Mammary epithelial cell (primary cell): ENCODE measurements at regions of chr9 and their contacts with region 1.

Region 1: DNA sequence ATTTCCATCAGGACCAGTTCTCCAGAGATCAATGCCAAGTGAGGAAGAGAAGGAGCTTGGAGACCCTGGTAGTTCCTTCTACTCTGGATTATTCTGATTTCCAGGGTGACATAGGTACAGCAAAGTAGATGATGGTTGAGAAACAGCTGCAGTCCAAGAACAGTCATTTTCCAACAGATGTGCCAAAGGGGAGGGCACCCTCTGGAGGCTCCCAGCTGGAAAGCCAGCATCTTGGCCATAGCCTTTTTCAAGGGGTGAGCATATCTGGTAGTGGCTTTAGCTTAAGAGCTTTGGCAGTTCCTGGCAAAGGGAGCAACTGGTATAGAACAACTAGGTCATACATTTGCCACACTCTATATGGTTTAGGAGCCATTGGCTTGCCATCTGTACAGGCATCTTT is 492.7 kb downstream of the RASEF start:
- DNase-seq: peak; percentile 6
- H3K4me3 ChIP-seq: no peak overlapping the region
- H3K27ac ChIP-seq: no peak overlapping the region
- H3K4me1 ChIP-seq: no peaks in the 10 kb centered on the region
- H3K27me3 ChIP-seq: no peaks in the 10 kb centered on the region
- CTCF ChIP-seq: peak; percentile 34 to 66

Region 2: DNA sequence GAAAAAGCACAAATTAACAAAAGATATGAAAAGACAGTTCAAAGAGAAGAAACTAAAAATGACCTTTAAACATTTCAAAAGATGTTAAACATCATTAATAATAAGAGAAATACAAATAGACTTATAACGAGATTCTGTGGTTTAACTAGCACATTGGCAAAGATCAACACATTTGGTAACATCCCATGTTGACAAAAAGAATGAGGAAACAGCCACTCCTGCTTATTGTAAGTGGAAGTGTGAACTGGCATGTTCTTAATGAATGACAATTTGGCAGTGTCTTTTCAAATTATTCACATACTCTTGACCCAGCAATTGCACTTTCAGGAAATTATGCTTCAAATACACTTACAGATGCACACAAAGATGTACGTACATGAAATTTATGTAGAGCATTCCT is 1057.2 kb before region 1 on chr9:
- CTCF ChIA-PET with region 1: interaction called, 17 read pairs
- dilution Hi-C with region 1: no loop called
- in situ Hi-C with region 1: no loop called
- intact Hi-C with region 1: no loop called
- DNase-seq: no peak
- H3K4me3 ChIP-seq: no peak overlapping the region
- H3K27ac ChIP-seq: no peak overlapping the region
- H3K4me1 ChIP-seq: no peaks in the 10 kb centered on the region
- H3K27me3 ChIP-seq: no peaks in the 10 kb centered on the region
- CTCF ChIP-seq: no peak

Region 3: GRCh38 chr9:82299870-82300269 is 270.4 kb before region 1 on chr9:
- CTCF ChIA-PET with region 1: no interaction called
- dilution Hi-C with region 1: no loop called
- in situ Hi-C with region 1: no loop called
- intact Hi-C with region 1: no loop called
- DNase-seq: no peak
- H3K4me3 ChIP-seq: no peak overlapping the region
- H3K27ac ChIP-seq: no peak overlapping the region
- H3K4me1 ChIP-seq: no peaks in the 10 kb centered on the region
- H3K27me3 ChIP-seq: no peaks in the 10 kb centered on the region
- CTCF ChIP-seq: no peak

Region 4: GRCh38 chr9:82518919-82519318 is 51.3 kb before region 1 on chr9:
- CTCF ChIA-PET with region 1: no interaction called
- dilution Hi-C with region 1: loop called (anchors 5 kb)
- in situ Hi-C with region 1: no loop called
- intact Hi-C with region 1: no loop called
- DNase-seq: no peak
- H3K4me3 ChIP-seq: no peak overlapping the region
- H3K27ac ChIP-seq: no peak overlapping the region
- H3K4me1 ChIP-seq: no peaks in the 10 kb centered on the region
- H3K27me3 ChIP-seq: no peaks in the 10 kb centered on the region
- CTCF ChIP-seq: no peak

Region 5: GRCh38 chr9:82593501-82593900 is 23.3 kb after region 1 on chr9:
- CTCF ChIA-PET with region 1: no interaction called
- dilution Hi-C with region 1: no loop called
- in situ Hi-C with region 1: no loop called
- intact Hi-C with region 1: no loop called
- DNase-seq: no peak
- H3K4me3 ChIP-seq: no peak overlapping the region
- H3K27ac ChIP-seq: no peak overlapping the region
- H3K4me1 ChIP-seq: no peaks in the 10 kb centered on the region
- H3K27me3 ChIP-seq: no peaks in the 10 kb centered on the region
- CTCF ChIP-seq: no peak